ENCODE measurements at regions of chr16 and their contacts with region 1.

Region 1: DNA sequence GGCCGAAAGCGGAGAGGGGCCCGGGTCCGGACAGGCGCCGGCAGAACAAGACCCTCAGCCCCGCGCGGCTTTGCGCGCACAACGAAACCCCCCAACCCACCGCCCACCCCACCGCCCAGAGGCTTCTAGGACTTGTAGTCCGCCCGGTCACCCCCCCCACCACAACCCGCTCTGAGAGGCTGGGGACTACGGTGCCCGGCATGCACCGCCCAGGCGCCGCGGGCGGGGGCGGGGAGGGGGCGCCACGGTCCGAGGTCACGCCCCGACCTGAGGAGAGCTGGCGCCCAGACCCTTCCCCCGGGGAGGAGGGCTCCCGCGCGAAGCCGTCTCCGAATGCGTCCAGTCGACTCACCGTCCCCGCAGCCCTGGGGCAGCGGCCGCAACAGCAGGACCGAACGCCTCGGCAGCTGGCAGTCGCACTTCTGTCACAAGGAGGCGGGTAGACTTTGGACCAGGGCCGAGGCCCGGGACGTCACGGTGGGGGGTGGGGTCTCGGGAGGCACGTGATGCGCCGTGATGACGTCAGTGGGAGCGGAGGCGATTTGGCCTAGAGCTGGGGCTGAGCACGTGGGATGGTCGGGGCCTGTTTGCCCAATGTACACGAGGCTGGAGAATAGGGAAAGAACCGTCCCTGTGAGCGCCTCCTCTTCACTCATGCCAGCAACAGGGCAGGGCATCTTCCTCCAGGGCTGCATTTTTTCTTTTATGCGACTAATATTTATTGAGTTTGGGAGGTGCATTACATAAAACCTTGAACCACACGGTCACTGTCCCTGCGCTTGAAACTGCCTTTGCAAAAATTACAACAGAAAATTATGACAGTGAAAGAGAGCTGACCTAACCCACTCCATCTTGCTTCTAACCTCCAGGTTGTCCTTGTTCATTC is at the start of gene CDIP1:
- DNase-seq: peak; percentile 86
- H3K4me3 Mint-ChIP-seq: peak within 1 kb of the TSS; percentile 80
- H3K27ac Mint-ChIP-seq: peak within 1 kb of the TSS; percentile 82
- H3K4me1 Mint-ChIP-seq: peaks cover 40% of the 10 kb centered on the region
- H3K27me3 Mint-ChIP-seq: peaks cover 5% of the 10 kb centered on the region
- total RNA-seq, gene CDIP1: 61.6 and 62.7 TPM in 2 replicates

Region 2: GRCh38 chr16:4416200-4417032 is 122.2 kb before region 1 on chr16 and contains the start of gene CORO7:
- intact Hi-C with region 1: loop called (anchors 1 kb)
- DNase-seq: peak; percentile 99
- H3K4me3 Mint-ChIP-seq: peak within 1 kb of the TSS; percentile 90
- H3K27ac Mint-ChIP-seq: peak within 1 kb of the TSS; percentile 92
- H3K4me1 Mint-ChIP-seq: peaks cover 16% of the 10 kb centered on the region
- H3K27me3 Mint-ChIP-seq: peaks cover 7% of the 10 kb centered on the region
- total RNA-seq, gene CORO7: 87.9 and 90.8 TPM in 2 replicates

Region 3: DNA sequence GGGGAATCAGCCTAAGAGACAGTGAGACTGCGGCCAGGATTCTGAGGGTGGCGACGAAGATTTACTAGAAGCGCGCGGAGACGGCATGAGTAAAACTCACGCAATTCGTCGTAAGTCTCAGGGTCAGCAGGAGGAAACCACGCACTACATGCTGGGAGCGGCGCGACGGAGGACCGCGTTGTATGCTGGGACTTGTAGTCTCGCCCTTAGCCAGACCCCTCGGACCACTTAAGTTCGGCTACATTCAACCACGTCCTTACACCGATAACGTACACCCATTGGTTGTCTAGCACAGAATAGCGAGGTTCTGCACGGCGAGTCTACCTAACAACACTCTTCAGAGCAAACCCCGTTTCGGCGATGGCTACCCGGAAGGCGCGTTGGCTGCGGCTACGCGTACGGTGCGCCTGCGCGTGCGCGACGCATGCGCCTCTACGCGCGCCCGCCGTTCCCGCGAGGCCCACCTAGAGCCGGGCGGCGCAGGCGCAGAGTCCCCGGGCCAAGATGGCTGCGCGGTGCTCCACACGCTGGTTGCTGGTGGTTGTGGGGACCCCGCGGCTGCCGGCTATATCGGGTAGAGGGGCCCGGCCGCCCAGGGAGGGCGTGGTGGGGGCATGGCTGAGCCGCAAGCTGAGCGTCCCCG is 113.1 kb before region 1 on chr16 and contains the start of gene DNAJA3:
- intact Hi-C with region 1: loop called (anchors 5 kb)
- DNase-seq: peak; percentile 91
- H3K4me3 Mint-ChIP-seq: peak within 1 kb of the TSS; percentile 98
- H3K27ac Mint-ChIP-seq: peak within 1 kb of the TSS; percentile 100
- H3K4me1 Mint-ChIP-seq: peaks cover 31% of the 10 kb centered on the region
- H3K27me3 Mint-ChIP-seq: peaks cover 3% of the 10 kb centered on the region
- total RNA-seq, gene DNAJA3: 103 and 107 TPM in 2 replicates

Region 4: DNA sequence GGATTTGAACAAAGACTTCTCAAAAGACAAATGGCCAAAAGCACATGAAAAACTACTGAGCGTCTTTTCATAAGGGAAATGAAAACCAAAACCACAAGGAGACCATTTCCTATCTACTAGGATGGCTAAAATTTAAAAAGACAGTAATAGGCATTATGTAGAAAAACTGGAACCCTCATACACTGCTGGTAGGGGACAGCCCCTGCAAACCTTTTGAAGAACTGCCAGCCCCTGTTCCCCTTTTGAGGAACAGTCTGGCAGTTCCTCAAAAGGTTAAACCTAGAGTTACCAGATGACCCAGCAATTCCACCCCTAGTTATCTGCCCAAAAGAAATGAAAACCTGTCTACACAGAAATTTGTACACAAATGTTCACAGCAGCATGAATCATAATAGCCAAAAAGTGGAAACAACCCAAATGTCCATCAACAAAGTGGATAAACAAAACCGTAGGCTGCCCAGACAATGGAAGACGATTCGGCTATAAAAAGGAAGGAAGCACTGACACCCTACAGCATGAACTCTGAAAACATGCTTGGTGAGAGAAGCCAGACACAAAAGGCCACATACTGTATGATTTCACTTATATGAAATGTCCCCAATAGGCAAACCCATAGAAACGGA is 22.9 kb before region 1 on chr16:
- intact Hi-C with region 1: loop called (anchors 1 kb)
- DNase-seq: no peak
- H3K4me3 Mint-ChIP-seq: peak overlapping the region; percentile 69
- H3K27ac Mint-ChIP-seq: peak overlapping the region; percentile 82
- H3K4me1 Mint-ChIP-seq: peaks cover 22% of the 10 kb centered on the region
- H3K27me3 Mint-ChIP-seq: no peaks in the 10 kb centered on the region

Region 5: GRCh38 chr16:4723071-4723767 is 184.6 kb after region 1 on chr16:
- intact Hi-C with region 1: no loop called
- DNase-seq: no peak
- H3K4me3 Mint-ChIP-seq: no peak overlapping the region
- H3K27ac Mint-ChIP-seq: no peak overlapping the region
- H3K4me1 Mint-ChIP-seq: no peaks in the 10 kb centered on the region
- H3K27me3 Mint-ChIP-seq: no peaks in the 10 kb centered on the region